GM12878 (cell line): ENCODE measurements at regions of chr5 and their contacts with region 1.

Region 1: DNA sequence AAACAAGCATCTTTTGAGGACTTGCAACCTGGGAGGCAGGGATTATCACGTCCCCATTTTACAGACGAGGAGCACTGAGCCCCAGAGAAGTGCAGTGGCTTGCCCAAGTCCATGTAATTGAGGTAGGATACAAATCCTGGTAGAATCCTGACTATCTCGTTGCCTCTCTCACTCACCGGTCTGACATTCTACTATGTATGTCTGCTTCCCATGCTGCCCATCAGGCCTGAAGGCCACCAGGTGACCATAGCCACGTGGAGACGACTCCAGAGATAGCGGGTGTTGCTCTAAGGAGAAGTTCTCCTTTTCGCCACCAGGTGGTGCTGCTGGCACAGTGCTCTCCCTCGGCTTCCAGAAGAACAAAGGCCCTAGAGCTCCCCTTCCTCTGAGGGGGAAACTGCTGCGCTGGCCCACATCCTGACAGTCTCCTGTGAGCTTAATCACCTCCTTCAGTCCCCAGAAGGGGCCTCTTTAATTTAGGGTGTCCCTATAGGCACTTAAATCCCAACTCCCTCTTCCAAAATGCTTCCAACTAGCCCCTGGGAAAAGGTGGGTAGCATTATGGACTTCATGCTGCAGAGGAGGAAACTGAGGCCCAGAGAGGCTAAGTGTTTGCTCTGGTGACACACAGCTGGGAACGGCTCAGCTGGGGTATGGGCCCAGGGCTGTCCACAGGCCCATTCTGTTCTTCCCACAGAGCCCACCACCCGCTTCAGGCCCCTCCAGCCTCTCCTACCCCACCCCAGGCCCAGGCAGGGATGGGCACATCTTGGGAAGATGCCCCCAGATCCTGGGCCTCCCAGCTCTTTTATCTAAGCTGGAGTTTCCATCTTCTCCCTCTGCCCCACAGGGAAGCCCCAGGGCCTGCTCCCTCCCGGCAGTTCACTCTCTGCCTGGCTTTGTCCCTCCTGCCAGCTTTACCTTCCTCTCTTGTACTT is 6.4 kb downstream of the SLC34A1 start:
- DNase-seq: peak; percentile 74
- ATAC-seq: peak; percentile 89
- H3K4me3 ChIP-seq: no peak overlapping the region
- H3K27ac ChIP-seq: peak overlapping the region; percentile 67
- H3K4me1 ChIP-seq: peaks cover 26% of the 10 kb centered on the region
- H3K27me3 ChIP-seq: no peaks in the 10 kb centered on the region
- CTCF ChIP-seq: peak; percentile 91 to 97 (median 94)
- EP300 ChIP-seq: no peak; a peak in 1 of 4 replicates
- POLR2A ChIP-seq: no peak
- RAD21 ChIP-seq: peak; percentile 86

Region 2: DNA sequence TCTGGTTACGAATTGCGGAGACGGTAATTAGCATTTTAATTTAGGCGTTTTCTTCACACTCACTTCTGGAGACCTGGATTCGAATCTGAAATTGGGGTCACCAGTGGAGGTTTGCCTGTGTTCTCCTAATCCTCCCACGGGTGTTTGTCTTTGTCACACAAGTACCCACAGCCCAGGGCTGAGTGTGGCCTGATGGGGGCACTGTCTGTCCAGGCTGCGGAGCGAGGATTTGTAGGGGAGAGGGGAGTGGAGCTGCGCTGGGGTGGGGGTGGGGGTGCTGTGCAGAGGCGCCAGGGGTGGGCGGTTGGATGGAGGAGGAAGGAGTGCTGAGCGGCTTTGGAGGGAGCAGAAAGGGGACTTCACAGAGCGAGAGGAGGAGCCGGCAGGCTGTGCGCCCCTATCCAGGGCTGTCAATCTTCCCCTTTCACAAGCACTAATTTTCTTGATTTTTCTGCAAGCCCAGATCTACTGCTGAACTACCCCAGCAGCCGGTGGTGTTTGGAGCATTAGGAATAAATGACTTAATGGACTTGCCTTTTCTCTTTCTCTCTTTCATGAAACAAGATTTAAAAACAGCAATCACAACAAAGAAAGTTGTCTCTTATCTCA is 690.3 kb before region 1 on chr5:
- CTCF ChIA-PET with region 1: no interaction called
- POLR2A ChIA-PET with region 1: no interaction called
- RAD21 ChIA-PET with region 1: no interaction called
- SMC1A ChIA-PET with region 1: no interaction called
- in situ Hi-C with region 1: no loop called
- intact Hi-C with region 1: no loop called
- DNase-seq: no peak
- ATAC-seq: 0 out of 3 replicates have a peak, but pooled peaks have one; percentile 36
- H3K4me3 ChIP-seq: no peak overlapping the region
- H3K27ac ChIP-seq: no peak overlapping the region
- H3K4me1 ChIP-seq: no peaks in the 10 kb centered on the region
- H3K27me3 ChIP-seq: peaks cover 0 to 4% of the 10 kb centered on the region in 2 experiments; a peak in 3 of 4 replicates
- CTCF ChIP-seq: peak in 2 of 3 experiments; percentile 25 to 37; a peak in 2 of 6 replicates
- EP300 ChIP-seq: no peak
- POLR2A ChIP-seq: no peak
- RAD21 ChIP-seq: peak; percentile 41; the same call in 1 of the 2 replicates

Region 3: DNA sequence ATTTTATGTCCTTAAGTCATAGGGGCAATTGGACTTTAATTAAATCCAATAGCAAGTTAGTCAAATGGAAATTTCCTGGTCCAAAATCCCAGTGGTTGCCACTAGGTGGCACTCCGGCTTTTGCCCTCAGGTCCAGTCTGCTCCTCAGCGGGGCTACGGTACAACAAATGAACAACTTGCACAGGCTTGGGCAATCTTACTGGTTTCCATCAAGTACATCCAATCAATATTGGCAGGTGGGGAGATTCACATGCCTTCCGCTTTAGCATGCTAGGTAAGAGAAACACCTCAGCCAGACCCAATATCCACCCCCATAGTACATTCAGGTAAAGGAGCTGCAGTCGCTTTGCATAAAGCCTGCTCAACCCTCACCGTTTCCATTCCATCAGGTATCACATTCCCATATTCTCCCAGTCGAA is 72.7 kb before region 1 on chr5:
- CTCF ChIA-PET with region 1: interaction called, 88 read pairs
- POLR2A ChIA-PET with region 1: interaction called, 3 read pairs
- RAD21 ChIA-PET with region 1: interaction called, 35 read pairs
- SMC1A ChIA-PET with region 1: interaction called, 26 read pairs
- in situ Hi-C with region 1: no loop called
- intact Hi-C with region 1: loop called (anchors 1 kb)
- DNase-seq: no peak
- ATAC-seq: peak; percentile 80
- H3K4me3 ChIP-seq: no peak overlapping the region
- H3K27ac ChIP-seq: no peak overlapping the region
- H3K4me1 ChIP-seq: peaks cover 11% of the 10 kb centered on the region
- H3K27me3 ChIP-seq: no peaks in the 10 kb centered on the region
- CTCF ChIP-seq: peak; percentile 85 to 97 (median 93)
- EP300 ChIP-seq: no peak
- POLR2A ChIP-seq: no peak
- RAD21 ChIP-seq: peak; percentile 90

Region 4: GRCh38 chr5:177362610-177363507 is 27.8 kb before region 1 on chr5:
- CTCF ChIA-PET with region 1: interaction called, 33 read pairs
- POLR2A ChIA-PET with region 1: interaction called, 17 read pairs
- RAD21 ChIA-PET with region 1: interaction called, 29 read pairs
- SMC1A ChIA-PET with region 1: interaction called, 32 read pairs
- in situ Hi-C with region 1: no loop called
- intact Hi-C with region 1: loop called (anchors 1 kb)
- DNase-seq: no peak
- ATAC-seq: peak; percentile 72
- H3K4me3 ChIP-seq: peak overlapping the region; percentile 63
- H3K27ac ChIP-seq: peak overlapping the region; percentile 91
- H3K4me1 ChIP-seq: peaks cover 59% of the 10 kb centered on the region
- H3K27me3 ChIP-seq: no peaks in the 10 kb centered on the region
- CTCF ChIP-seq: no peak; a peak in 1 of 6 replicates
- EP300 ChIP-seq: no peak; a peak in 1 of 4 replicates
- POLR2A ChIP-seq: peak; percentile 59
- RAD21 ChIP-seq: no peak

Region 5: GRCh38 chr5:177412603-177413233 is 22.1 kb after region 1 on chr5:
- CTCF ChIA-PET with region 1: interaction called, 12 read pairs
- POLR2A ChIA-PET with region 1: interaction called, 9 read pairs
- RAD21 ChIA-PET with region 1: interaction called, 3 read pairs
- SMC1A ChIA-PET with region 1: interaction called, 4 read pairs
- in situ Hi-C with region 1: no loop called
- intact Hi-C with region 1: no loop called
- DNase-seq: peak; percentile 71
- ATAC-seq: peak; percentile 88
- H3K4me3 ChIP-seq: peak overlapping the region; percentile 33; the same call in 1 of the 2 replicates
- H3K27ac ChIP-seq: peak overlapping the region; percentile 83
- H3K4me1 ChIP-seq: peaks cover 18% of the 10 kb centered on the region
- H3K27me3 ChIP-seq: no peaks in the 10 kb centered on the region
- CTCF ChIP-seq: no peak
- EP300 ChIP-seq: peak in 1 of 2 experiments; percentile 74; a peak in 3 of 4 replicates
- POLR2A ChIP-seq: peak; percentile 66
- RAD21 ChIP-seq: no peak

Region 6: DNA sequence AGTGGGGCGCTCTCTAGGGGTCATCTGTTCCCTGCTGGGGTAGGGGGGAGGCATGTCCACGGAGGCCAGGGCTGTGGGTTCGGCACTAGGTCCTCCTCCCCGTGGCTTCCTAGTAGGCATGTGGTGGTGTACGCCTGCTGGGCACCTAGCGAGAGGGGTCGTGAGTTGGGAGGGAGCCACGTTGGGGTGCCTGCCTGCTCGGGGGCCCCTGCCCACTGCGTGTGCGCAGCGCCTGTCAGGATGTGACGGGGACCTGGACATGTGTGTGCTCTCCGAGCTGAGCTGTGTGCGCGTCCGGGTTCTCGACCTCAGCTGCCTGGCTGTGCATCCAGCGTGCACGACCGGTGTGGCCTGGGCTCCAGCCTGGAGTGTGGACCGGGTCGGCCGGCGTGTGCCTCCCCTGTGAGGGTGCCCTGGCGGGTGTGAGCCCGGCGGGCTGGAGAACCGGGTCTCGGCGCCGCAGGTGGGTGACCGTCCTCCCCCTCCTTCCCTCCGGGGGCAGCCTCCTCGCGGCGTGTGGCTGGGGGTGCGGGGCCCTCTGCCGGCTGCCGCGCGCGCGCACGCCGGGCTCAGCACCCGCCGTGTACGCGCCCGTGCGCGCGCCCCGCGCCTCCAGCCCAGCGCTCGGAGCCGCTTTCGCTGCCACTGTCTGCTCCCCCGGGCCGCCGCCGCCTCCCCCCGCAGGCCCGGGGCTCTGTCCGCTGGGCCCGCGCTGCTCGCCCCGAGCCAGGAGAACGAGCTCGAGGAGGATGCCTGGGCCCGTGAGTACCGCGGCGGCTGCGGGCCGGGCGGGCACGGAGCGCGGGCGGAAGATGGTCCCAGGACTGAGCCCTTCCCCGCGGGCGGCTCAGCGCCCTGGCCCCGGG is 55.8 kb after region 1 on chr5 and contains the start of gene PRR7:
- CTCF ChIA-PET with region 1: interaction called, 33 read pairs
- POLR2A ChIA-PET with region 1: interaction called, 18 read pairs
- RAD21 ChIA-PET with region 1: interaction called, 108 read pairs
- SMC1A ChIA-PET with region 1: interaction called, 20 read pairs
- in situ Hi-C with region 1: no loop called
- intact Hi-C with region 1: no loop called
- DNase-seq: no peak
- ATAC-seq: peak; percentile 55
- H3K4me3 ChIP-seq: peak within 1 kb of the TSS; percentile 78
- H3K27ac ChIP-seq: peak within 1 kb of the TSS; percentile 79
- H3K4me1 ChIP-seq: peaks cover 32% of the 10 kb centered on the region
- H3K27me3 ChIP-seq: no peaks in the 10 kb centered on the region
- CTCF ChIP-seq: peak in 1 of 3 experiments; percentile 26; a peak in 1 of 6 replicates
- EP300 ChIP-seq: 0 out of 4 replicates have a peak, but pooled peaks of 1 of the 2 experiments have one; percentile 15
- POLR2A ChIP-seq: no peak
- RAD21 ChIP-seq: no peak
- polyA plus RNA-seq, gene PRR7: not detected

Region 7: DNA sequence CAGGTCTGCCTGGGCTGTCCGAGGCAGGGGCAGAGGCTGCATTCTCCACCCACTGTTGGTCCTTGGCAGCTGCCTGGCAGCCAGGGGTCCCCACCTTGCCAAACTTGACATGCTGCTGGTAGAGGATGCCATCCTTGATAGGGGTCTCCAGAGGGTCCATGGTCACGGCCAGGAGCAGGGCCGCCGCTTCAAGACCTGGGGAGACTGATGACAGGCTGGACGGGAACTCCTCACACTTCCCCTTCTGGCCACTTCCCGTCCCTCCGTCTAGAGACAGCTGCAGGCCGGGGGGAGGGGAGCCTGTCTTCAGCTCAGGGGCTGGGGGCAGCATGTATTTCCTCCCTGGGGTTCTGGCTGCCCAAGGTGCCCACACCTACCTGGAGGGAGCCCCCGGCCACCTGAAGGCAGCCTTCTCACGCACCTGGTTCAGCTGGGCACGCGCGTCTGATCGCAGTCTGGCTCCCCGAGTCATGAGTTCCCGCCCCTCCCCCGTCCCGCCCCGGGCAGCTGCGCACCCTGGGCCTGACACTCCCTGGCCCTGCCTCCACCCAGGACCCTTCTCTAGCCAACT is 118.8 kb after region 1 on chr5 and contains the start of gene DOK3:
- CTCF ChIA-PET with region 1: interaction called, 26 read pairs
- POLR2A ChIA-PET with region 1: interaction called, 4 read pairs
- RAD21 ChIA-PET with region 1: interaction called, 5 read pairs
- SMC1A ChIA-PET with region 1: interaction called, 6 read pairs
- in situ Hi-C with region 1: no loop called
- intact Hi-C with region 1: no loop called
- DNase-seq: no peak
- ATAC-seq: peak; percentile 63
- H3K4me3 ChIP-seq: peak within 1 kb of the TSS; percentile 87
- H3K27ac ChIP-seq: peak within 1 kb of the TSS; percentile 87
- H3K4me1 ChIP-seq: peaks cover 37% of the 10 kb centered on the region
- H3K27me3 ChIP-seq: no peaks in the 10 kb centered on the region
- CTCF ChIP-seq: no peak
- EP300 ChIP-seq: no peak
- POLR2A ChIP-seq: no peak
- RAD21 ChIP-seq: no peak
- polyA plus RNA-seq, gene DOK3: 6.6 to 8.0 TPM

Region 8: DNA sequence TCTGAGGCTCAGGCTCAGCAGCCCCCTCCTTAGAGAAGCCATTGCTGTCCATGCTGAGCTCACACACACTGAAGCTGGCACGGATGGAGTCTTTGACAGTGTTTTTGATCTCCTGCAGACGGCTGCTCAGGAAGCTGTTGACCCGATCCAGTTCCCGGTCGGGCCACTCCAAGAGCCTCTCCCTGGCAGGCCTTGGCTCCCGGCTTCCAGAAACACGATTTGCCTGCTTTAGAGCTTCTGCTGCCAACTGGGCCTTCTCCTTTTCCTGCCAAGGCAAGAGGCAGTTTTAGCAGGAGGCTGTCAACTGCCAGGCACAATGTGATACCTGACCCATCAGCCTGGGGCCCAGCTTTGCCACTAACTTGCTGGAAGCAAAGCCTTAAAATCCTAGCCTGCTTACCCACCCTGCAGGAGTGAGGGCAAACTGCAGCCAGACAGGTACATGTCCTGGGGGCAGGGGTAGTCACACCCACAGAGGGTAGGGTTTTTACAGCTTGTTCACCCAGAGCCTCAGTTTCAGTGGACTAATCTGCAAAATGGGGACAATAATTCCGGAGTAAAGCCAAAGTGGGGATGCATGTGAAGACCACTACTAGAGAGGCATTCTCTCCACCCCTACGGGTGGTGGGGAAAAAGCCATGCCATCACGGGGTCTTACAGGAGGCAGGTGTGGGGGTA is 134.4 kb after region 1 on chr5:
- CTCF ChIA-PET with region 1: no interaction called
- POLR2A ChIA-PET with region 1: no interaction called
- RAD21 ChIA-PET with region 1: no interaction called
- SMC1A ChIA-PET with region 1: no interaction called
- in situ Hi-C with region 1: no loop called
- intact Hi-C with region 1: no loop called
- DNase-seq: no peak
- ATAC-seq: no peak
- H3K4me3 ChIP-seq: no peak overlapping the region
- H3K27ac ChIP-seq: no peak overlapping the region
- H3K4me1 ChIP-seq: no peaks in the 10 kb centered on the region; the same call in 1 of the 2 replicates
- H3K27me3 ChIP-seq: no peaks in the 10 kb centered on the region
- CTCF ChIP-seq: no peak
- EP300 ChIP-seq: no peak
- POLR2A ChIP-seq: no peak
- RAD21 ChIP-seq: no peak

Region 9: GRCh38 chr5:178404987-178405386 is 1014.4 kb after region 1 on chr5:
- CTCF ChIA-PET with region 1: no interaction called
- POLR2A ChIA-PET with region 1: no interaction called
- RAD21 ChIA-PET with region 1: no interaction called
- SMC1A ChIA-PET with region 1: no interaction called
- in situ Hi-C with region 1: no loop called
- intact Hi-C with region 1: no loop called
- DNase-seq: no peak
- ATAC-seq: no peak
- H3K4me3 ChIP-seq: no peak overlapping the region
- H3K27ac ChIP-seq: no peak overlapping the region
- H3K4me1 ChIP-seq: no peaks in the 10 kb centered on the region
- H3K27me3 ChIP-seq: no peaks in the 10 kb centered on the region
- CTCF ChIP-seq: no peak
- EP300 ChIP-seq: no peak
- POLR2A ChIP-seq: no peak
- RAD21 ChIP-seq: no peak